ENCODE measurements at regions of chr19 and their contacts with region 1.

Region 1: DNA sequence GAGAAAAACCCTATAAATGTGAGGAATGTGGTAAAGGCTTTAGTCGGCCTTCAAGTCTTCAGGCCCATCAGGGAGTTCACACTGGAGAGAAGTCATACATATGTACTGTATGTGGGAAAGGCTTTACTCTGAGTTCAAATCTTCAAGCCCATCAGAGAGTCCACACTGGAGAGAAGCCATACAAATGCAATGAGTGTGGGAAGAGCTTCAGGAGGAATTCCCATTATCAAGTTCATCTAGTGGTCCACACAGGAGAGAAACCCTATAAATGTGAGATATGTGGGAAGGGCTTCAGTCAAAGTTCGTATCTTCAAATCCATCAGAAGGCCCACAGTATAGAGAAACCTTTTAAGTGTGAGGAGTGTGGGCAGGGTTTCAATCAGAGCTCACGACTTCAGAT is 11.7 kb downstream of the ZNF226 start:
- DNase-seq: no peak
- H3K4me3 ChIP-seq: no peak overlapping the region
- H3K27ac ChIP-seq: no peak overlapping the region
- H3K4me1 ChIP-seq: no peaks in the 10 kb centered on the region
- H3K27me3 ChIP-seq: no peaks in the 10 kb centered on the region
- CTCF ChIP-seq: no peak
- EP300 ChIP-seq: no peak
- POLR2A ChIP-seq: no peak

Region 2: GRCh38 chr19:44232867-44233266 is 56.3 kb after region 1 on chr19:
- in situ Hi-C with region 1: no loop called
- intact Hi-C with region 1: loop called (anchors 2 kb)
- DNase-seq: no peak
- H3K4me3 ChIP-seq: no peak overlapping the region
- H3K27ac ChIP-seq: no peak overlapping the region
- H3K4me1 ChIP-seq: no peaks in the 10 kb centered on the region
- H3K27me3 ChIP-seq: no peaks in the 10 kb centered on the region
- CTCF ChIP-seq: no peak
- EP300 ChIP-seq: no peak
- POLR2A ChIP-seq: no peak

Region 3: DNA sequence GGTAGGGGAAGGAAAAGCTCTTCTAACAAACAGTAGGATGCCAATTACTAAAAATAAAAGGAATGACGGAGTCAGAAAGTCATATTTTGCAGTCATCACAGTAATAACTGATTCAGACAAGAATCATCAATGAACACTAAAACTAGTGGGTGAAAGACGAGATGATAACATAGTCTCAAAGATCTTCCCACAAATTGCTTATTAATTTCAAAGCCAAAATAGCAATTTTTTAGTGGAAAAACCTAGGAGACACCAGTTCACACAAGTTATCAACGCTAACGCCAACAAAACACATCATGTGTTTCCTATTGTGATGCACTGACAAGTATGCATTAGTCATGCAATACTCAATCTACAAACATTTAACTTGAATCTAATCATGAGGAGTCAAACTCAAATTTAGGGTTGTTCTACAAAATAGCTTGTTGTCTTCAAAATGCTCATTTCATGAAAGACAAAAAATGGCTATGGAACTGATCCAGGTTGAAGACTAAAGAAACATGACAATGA is 101.6 kb after region 1 on chr19:
- in situ Hi-C with region 1: no loop called
- intact Hi-C with region 1: no loop called
- DNase-seq: no peak
- H3K4me3 ChIP-seq: no peak overlapping the region
- H3K27ac ChIP-seq: no peak overlapping the region
- H3K4me1 ChIP-seq: no peaks in the 10 kb centered on the region
- H3K27me3 ChIP-seq: no peaks in the 10 kb centered on the region
- CTCF ChIP-seq: no peak
- EP300 ChIP-seq: no peak
- POLR2A ChIP-seq: no peak

Measured in transverse colon (tissue), 4 donors.